SK-N-SH (cell line): ENCODE measurements at regions of chr7 and their contacts with region 1.

Region 1: GRCh38 chr7:127253281-127254162 is 781 bp upstream of the GRM8 start:
- DNase-seq: peak; percentile 93
- H3K4me3 ChIP-seq: peak overlapping the region; percentile 69 to 77
- H3K27ac ChIP-seq: no peak overlapping the region
- H3K4me1 ChIP-seq: peaks cover 0 to 24% of the 10 kb centered on the region in 2 experiments; a peak in 1 of 4 replicates
- H3K27me3 ChIP-seq: peaks cover 57% of the 10 kb centered on the region
- CTCF ChIP-seq: peak; percentile 91
- EP300 ChIP-seq: no peak
- RAD21 ChIP-seq: peak; percentile 84

Region 2: GRCh38 chr7:126940723-126941307 is 312.7 kb before region 1 on chr7:
- CTCF ChIA-PET with region 1: no interaction called
- POLR2A ChIA-PET with region 1: no interaction called
- DNase-seq: no peak
- H3K4me3 ChIP-seq: no peak overlapping the region
- H3K27ac ChIP-seq: no peak overlapping the region
- H3K4me1 ChIP-seq: no peaks in the 10 kb centered on the region
- H3K27me3 ChIP-seq: no peaks in the 10 kb centered on the region
- CTCF ChIP-seq: no peak
- EP300 ChIP-seq: no peak
- RAD21 ChIP-seq: no peak

Region 3: DNA sequence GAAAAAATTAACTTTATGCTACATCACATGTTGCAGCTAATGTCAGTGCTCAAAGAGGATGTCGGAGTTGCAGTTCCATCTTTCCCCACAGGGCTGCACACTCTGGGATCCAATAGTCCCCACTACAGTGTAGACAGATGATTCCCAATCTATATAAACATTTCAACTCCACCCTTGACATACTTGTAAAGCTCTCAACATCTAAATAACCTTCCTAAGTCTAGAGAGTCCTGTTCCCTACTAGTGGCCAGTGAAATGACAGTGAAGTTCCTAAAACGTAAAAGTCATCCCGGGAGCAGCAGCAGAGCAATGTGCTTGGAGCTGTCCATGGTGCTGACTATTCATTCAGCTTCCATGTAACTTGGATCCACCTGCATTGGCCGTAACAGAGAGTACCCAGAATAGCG is 145.9 kb before region 1 on chr7:
- CTCF ChIA-PET with region 1: interaction called, 30 read pairs
- POLR2A ChIA-PET with region 1: no interaction called
- DNase-seq: peak; percentile 45
- H3K4me3 ChIP-seq: no peak overlapping the region
- H3K27ac ChIP-seq: no peak overlapping the region
- H3K4me1 ChIP-seq: no peaks in the 10 kb centered on the region
- H3K27me3 ChIP-seq: no peaks in the 10 kb centered on the region
- CTCF ChIP-seq: peak; percentile 77
- EP300 ChIP-seq: no peak
- RAD21 ChIP-seq: peak; percentile 62

Region 4: DNA sequence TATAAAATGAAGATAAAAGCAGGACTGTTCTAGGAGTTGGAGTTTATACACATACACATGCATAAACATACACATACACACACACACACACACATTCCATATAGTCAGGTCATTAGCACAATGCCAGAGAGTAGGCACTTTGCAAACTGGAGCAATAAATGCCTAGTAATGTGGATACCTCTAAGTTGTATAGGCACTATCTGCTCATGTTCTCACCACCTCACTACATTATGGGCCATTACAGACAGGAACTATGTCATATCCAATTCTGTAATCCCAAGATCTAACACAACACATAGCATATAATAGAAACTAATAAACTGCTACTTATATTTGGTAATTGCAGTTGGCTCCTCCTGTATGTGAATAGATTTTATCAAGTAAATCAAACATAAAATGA is 116.4 kb before region 1 on chr7:
- CTCF ChIA-PET with region 1: interaction called, 12 read pairs
- POLR2A ChIA-PET with region 1: no interaction called
- DNase-seq: peak; percentile 28
- H3K4me3 ChIP-seq: no peak overlapping the region
- H3K27ac ChIP-seq: peak overlapping the region in 1 of 2 experiments; percentile 67; a peak in 1 of 4 replicates
- H3K4me1 ChIP-seq: peaks cover 0 to 18% of the 10 kb centered on the region in 2 experiments; a peak in 1 of 4 replicates
- H3K27me3 ChIP-seq: no peaks in the 10 kb centered on the region
- CTCF ChIP-seq: no peak
- EP300 ChIP-seq: peak in 1 of 2 experiments; percentile 74; a peak in 2 of 4 replicates
- RAD21 ChIP-seq: no peak; the same call in 1 of the 2 replicates

Region 5: GRCh38 chr7:127264219-127264618 is 10.7 kb after region 1 on chr7:
- CTCF ChIA-PET with region 1: interaction called, 21 read pairs
- POLR2A ChIA-PET with region 1: no interaction called
- DNase-seq: no peak
- H3K4me3 ChIP-seq: no peak overlapping the region
- H3K27ac ChIP-seq: no peak overlapping the region
- H3K4me1 ChIP-seq: no peaks in the 10 kb centered on the region
- H3K27me3 ChIP-seq: no peaks in the 10 kb centered on the region; the same call in 1 of the 2 replicates
- CTCF ChIP-seq: no peak
- EP300 ChIP-seq: no peak
- RAD21 ChIP-seq: no peak

Region 6: GRCh38 chr7:127287133-127287532 is 33.6 kb after region 1 on chr7:
- CTCF ChIA-PET with region 1: interaction called, 14 read pairs
- POLR2A ChIA-PET with region 1: no interaction called
- DNase-seq: no peak
- H3K4me3 ChIP-seq: no peak overlapping the region
- H3K27ac ChIP-seq: no peak overlapping the region
- H3K4me1 ChIP-seq: no peaks in the 10 kb centered on the region
- H3K27me3 ChIP-seq: no peaks in the 10 kb centered on the region; the same call in 1 of the 2 replicates
- CTCF ChIP-seq: no peak
- EP300 ChIP-seq: no peak
- RAD21 ChIP-seq: no peak